ENCODE measurements at regions of chr10 and their contacts with region 1.

Region 1: GRCh38 chr10:36181401-36181800 is 539.3 kb upstream of the FZD8 start:
- DNase-seq: peak in 1 of 5 donors; percentile 19
- ATAC-seq: peak in 2 of 4 donors; percentile 80 to 85
- H3K4me3 ChIP-seq: no peak overlapping the region
- H3K27ac ChIP-seq: peak overlapping the region in 5 of 12 donors; percentile 36 to 76 (median 59)
- H3K4me1 ChIP-seq: peaks cover 0 to 24% (median 15%) of the 10 kb centered on the region in 12 donors
- H3K27me3 ChIP-seq: no peaks in the 10 kb centered on the region
- CTCF ChIP-seq: no peak
- POLR2A ChIP-seq: no peak

Region 2: GRCh38 chr10:36423821-36424248 is 242.4 kb after region 1 on chr10:
- intact Hi-C with region 1: loop called in 1 of 10 experiments (anchors 10 kb)
- DNase-seq: no peak
- ATAC-seq: no peak
- H3K4me3 ChIP-seq: no peak overlapping the region
- H3K27ac ChIP-seq: no peak overlapping the region
- H3K4me1 ChIP-seq: peaks cover 0 to 5% (median 0%) of the 10 kb centered on the region in 12 donors
- H3K27me3 ChIP-seq: no peaks in the 10 kb centered on the region
- CTCF ChIP-seq: no peak
- POLR2A ChIP-seq: no peak